Dorsolateral prefrontal cortex (tissue), 120 donors: ENCODE measurements at regions of chr4 and their contacts with region 1.

Region 1: GRCh38 chr4:8840006-8840793 is 31.4 kb downstream of the HMX1 start:
- DNase-seq: peak in 7 of 10 donors; percentile 2 to 31 (median 21)
- H3K4me3 ChIP-seq: no peak overlapping the region
- H3K27ac ChIP-seq: no peak overlapping the region
- H3K27me3 ChIP-seq: peaks cover 0 to 34% (median 5%) of the 10 kb centered on the region in 45 donors
- CTCF ChIP-seq: no peak

Region 2: DNA sequence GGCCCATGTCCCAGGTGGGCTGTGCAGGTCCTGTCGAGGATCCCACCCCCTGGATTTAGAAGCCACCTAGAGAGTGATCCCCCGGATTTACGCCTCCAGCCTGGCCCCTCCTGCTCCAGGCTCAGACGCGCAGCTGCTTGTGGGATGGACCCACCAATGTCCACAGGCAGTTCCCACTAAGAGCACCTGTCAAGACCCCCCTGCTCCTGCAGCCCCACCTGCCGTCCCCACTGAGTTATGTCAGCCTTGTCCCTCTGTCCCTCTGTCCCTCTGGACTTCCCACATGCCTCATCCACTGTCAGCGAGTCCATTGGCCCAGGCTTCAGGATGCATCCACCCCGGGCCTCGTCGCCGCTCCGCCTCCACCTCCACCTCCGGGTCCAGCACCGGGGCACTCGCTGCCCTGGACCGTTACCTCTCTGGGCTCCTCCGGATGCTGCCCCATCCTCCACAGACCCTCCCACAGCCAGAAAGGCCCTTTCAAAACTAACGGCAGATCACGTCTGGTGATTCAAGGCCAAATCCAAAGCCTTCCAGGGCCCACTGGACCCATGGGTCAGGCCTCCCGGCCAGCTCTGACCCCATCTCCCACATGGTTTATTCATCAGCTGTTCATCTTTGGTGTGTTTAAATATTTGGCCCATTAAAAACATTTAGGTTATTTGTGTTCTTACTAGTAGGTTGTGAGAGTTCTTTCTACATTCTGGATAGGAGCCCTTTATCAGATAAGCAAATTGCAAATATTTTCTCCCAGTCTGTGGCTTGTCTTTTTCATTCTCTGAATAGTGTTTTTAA is 542.3 kb before region 1 on chr4:
- intact Hi-C with region 1: loop called in 1 of 2 experiments (anchors 5 kb)
- DNase-seq: peak in 5 of 10 donors; percentile 2 to 36 (median 24)
- H3K4me3 ChIP-seq: no peak overlapping the region
- H3K27ac ChIP-seq: no peak overlapping the region
- H3K27me3 ChIP-seq: no peaks in the 10 kb centered on the region
- CTCF ChIP-seq: no peak

Region 3: DNA sequence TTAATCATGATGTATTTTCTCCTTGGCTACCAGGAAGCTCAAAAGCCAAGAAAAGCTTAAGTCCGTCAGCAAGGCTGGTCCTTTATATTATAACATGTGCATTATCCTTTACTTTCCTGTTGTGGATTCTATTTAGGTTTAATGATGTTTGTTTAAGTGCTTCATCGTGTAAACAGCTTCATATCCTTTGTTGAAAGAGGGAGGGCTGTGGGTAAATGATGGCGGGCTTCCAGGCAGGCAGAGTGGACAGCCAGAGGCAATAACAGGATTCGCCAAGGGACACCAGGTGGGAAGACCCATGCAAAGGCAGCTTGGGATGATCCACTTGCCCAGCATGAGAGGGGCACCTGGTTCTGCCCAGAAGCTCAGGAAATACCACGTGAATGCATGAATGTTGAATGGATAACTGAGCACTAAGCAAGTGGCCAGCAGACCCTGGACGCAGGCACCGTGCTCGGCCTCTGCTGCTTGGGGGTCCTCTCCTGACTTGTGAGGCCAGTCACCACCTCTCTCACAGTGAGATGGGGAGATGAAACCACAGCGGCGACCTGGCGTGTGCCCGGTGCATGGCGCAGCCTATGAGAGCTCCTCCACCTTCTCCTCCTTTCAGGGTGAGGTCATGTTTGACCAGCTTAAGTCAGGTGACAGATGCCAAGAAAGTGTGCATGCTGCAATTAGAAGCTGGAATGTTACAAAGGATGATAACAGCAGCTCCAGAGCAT is 44.3 kb before region 1 on chr4:
- intact Hi-C with region 1: no loop called
- DNase-seq: no peak
- H3K4me3 ChIP-seq: no peak overlapping the region
- H3K27ac ChIP-seq: no peak overlapping the region
- H3K27me3 ChIP-seq: peaks cover 0 to 27% (median 4%) of the 10 kb centered on the region in 45 donors
- CTCF ChIP-seq: no peak